ENCODE measurements at regions of chr1 and their contacts with region 1.

Region 1: DNA sequence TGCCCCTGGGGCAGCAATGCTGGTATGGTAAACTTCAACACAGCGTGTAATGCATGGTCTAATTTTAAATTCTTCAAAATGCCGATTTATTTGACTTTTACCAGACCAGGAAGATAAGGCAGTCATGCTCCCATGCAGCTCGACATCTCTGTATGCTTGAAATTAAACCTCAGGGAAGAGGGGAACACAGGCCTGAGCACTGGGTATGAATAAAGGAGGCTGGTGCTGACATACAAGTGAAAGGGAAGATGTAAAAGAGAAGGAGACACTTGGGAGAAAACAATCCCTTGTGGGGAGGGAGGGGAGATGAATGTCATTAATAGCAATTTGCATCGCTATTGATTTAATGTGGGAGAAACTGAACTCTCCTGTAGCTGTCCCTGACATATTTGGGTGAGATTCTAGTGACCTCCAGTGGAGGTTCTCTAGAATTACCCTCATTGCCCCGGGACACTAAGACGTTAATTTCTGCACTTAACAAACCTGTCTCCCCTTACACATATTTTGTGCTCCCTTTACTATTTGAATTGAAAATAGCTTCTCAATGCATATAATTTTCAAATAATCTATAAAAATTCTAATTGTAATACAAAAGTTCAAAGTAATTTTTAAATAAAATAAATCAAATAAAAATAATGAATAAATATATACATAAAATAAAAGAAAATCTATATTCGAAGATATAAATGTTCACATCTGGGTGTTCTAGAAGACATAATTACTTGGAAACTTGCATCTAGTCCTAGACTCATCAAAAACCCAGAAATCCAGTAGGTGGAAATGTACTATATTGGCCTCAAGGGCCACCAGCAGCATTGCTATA is 283.1 kb downstream of the LMX1A start:
- DNase-seq: peak; percentile 80
- H3K4me3 Mint-ChIP-seq: no peak overlapping the region
- H3K27ac Mint-ChIP-seq: no peak overlapping the region
- H3K4me1 Mint-ChIP-seq: no peaks in the 10 kb centered on the region
- H3K27me3 Mint-ChIP-seq: no peaks in the 10 kb centered on the region
- CTCF ChIP-seq: peak; percentile 95

Region 2: GRCh38 chr1:163528710-163529348 is 1544.6 kb before region 1 on chr1:
- CTCF ChIA-PET with region 1: interaction called, 45 read pairs
- POLR2A ChIA-PET with region 1: interaction called, 4 read pairs
- intact Hi-C with region 1: loop called (anchors 1 kb)
- DNase-seq: peak; percentile 62
- H3K4me3 Mint-ChIP-seq: no peak overlapping the region
- H3K27ac Mint-ChIP-seq: no peak overlapping the region
- H3K4me1 Mint-ChIP-seq: no peaks in the 10 kb centered on the region
- H3K27me3 Mint-ChIP-seq: no peaks in the 10 kb centered on the region
- CTCF ChIP-seq: peak; percentile 66

Region 3: GRCh38 chr1:163820766-163821165 is 1252.6 kb before region 1 on chr1:
- CTCF ChIA-PET with region 1: interaction called, 8 read pairs
- POLR2A ChIA-PET with region 1: no interaction called
- intact Hi-C with region 1: loop called (anchors 1 kb)
- DNase-seq: peak; percentile 25
- H3K4me3 Mint-ChIP-seq: no peak overlapping the region
- H3K27ac Mint-ChIP-seq: no peak overlapping the region
- H3K4me1 Mint-ChIP-seq: peaks cover 8% of the 10 kb centered on the region
- H3K27me3 Mint-ChIP-seq: no peaks in the 10 kb centered on the region
- CTCF ChIP-seq: peak; percentile 41

Region 4: GRCh38 chr1:164617377-164618201 is 455.8 kb before region 1 on chr1:
- CTCF ChIA-PET with region 1: interaction called, 10 read pairs
- POLR2A ChIA-PET with region 1: no interaction called
- intact Hi-C with region 1: loop called (anchors 1 kb)
- DNase-seq: peak; percentile 63
- H3K4me3 Mint-ChIP-seq: no peak overlapping the region
- H3K27ac Mint-ChIP-seq: no peak overlapping the region
- H3K4me1 Mint-ChIP-seq: peaks cover 14% of the 10 kb centered on the region
- H3K27me3 Mint-ChIP-seq: no peaks in the 10 kb centered on the region
- CTCF ChIP-seq: peak; percentile 89

Region 5: DNA sequence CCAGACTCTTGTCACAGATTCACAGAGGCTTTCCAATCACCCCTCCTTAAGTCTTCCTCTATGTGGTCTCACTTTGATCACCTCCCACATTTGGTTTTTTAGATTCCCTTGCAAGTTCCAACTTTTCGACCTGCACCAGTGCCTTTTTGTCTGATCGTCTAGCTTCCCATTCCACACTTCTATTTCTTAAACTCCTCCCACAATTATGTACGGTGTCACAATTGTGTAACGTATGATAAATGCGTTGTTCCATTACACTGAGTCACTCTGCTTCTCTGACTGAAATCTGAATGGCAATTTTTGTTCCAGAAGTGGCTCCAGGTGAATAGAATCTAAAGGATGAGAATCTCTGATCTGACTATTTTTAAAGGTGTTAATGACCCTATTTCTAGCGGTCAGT is 37.0 kb before region 1 on chr1:
- CTCF ChIA-PET with region 1: no interaction called
- POLR2A ChIA-PET with region 1: no interaction called
- intact Hi-C with region 1: no loop called
- DNase-seq: peak; percentile 76
- H3K4me3 Mint-ChIP-seq: peak overlapping the region; percentile 14
- H3K27ac Mint-ChIP-seq: no peak overlapping the region
- H3K4me1 Mint-ChIP-seq: peaks cover 14% of the 10 kb centered on the region
- H3K27me3 Mint-ChIP-seq: no peaks in the 10 kb centered on the region
- CTCF ChIP-seq: no peak

Region 6: DNA sequence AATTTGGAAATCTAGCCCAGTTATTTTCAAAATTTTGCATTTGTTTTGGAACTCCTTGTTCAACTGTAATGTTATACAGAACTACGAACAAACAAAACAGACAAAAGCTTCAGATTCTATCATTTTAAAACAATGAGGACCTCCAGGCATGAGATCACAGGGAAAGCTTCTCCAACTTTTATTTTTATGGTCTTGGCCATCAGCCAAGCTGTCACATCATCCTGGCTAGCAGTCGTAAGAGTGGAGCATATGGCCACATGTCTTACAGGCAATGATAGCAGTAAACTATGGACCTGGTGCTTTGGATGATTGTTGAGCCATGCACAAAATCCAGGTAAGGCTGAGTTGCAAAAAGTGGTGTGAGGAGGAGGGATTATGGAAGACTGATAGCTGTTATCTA is 16.5 kb before region 1 on chr1:
- CTCF ChIA-PET with region 1: interaction called, 42 read pairs
- POLR2A ChIA-PET with region 1: interaction called, 3 read pairs
- intact Hi-C with region 1: no loop called
- DNase-seq: peak; percentile 21
- H3K4me3 Mint-ChIP-seq: no peak overlapping the region
- H3K27ac Mint-ChIP-seq: no peak overlapping the region
- H3K4me1 Mint-ChIP-seq: peaks cover 11% of the 10 kb centered on the region
- H3K27me3 Mint-ChIP-seq: no peaks in the 10 kb centered on the region
- CTCF ChIP-seq: no peak